Caco-2 (cell line): ENCODE measurements at regions of chr6 and their contacts with region 1.

Region 1: DNA sequence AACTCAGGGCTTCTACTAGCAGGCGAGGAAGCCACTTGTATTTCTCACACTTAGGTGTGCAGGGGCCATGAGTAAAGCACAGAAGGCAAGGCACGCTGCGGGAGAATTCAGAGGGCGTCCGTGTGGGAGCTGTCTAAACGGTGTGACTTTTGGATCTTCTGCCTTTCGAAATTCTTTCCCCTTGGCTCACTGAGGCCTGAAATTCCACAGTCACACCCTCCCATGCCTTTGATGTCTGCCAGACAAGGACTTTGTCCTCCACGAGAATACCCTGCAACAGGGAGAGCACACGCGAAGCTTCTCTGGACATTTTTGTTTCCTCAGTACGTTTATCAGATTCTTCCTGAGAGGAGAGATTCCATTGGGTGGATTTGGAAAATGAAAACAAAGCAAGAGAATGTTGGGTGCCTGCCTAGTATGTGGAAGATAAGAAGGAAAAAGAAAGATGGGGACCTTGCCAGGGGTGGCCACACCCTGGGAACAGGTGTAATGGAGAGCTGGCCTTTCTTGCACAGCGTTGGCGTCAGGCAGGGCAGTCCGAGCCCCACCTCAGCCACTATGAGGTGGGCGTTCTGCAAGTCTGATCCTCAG is 235.7 kb downstream of the MYLK4 start:
- DNase-seq: peak; percentile 91 to 96
- H3K4me3 ChIP-seq: peak overlapping the region; percentile 13
- H3K4me3 Mint-ChIP-seq: peak overlapping the region; percentile 72
- H3K27ac Mint-ChIP-seq: peak overlapping the region; percentile 95
- H3K4me1 ChIP-seq: peaks cover 59% of the 10 kb centered on the region
- H3K4me1 Mint-ChIP-seq: peaks cover 26% of the 10 kb centered on the region
- H3K27me3 ChIP-seq: no peaks in the 10 kb centered on the region
- H3K27me3 Mint-ChIP-seq: no peaks in the 10 kb centered on the region
- CTCF ChIP-seq: no peak

Region 2: GRCh38 chr6:1657771-1658165 is 857.3 kb before region 1 on chr6:
- CTCF ChIA-PET with region 1: no interaction called
- POLR2A ChIA-PET with region 1: interaction called, 14 read pairs
- intact Hi-C with region 1: no loop called
- DNase-seq: no peak
- H3K4me3 ChIP-seq: no peak overlapping the region
- H3K4me3 Mint-ChIP-seq: no peak overlapping the region
- H3K27ac Mint-ChIP-seq: no peak overlapping the region
- H3K4me1 ChIP-seq: no peaks in the 10 kb centered on the region
- H3K4me1 Mint-ChIP-seq: no peaks in the 10 kb centered on the region
- H3K27me3 ChIP-seq: no peaks in the 10 kb centered on the region
- H3K27me3 Mint-ChIP-seq: no peaks in the 10 kb centered on the region
- CTCF ChIP-seq: no peak

Region 3: DNA sequence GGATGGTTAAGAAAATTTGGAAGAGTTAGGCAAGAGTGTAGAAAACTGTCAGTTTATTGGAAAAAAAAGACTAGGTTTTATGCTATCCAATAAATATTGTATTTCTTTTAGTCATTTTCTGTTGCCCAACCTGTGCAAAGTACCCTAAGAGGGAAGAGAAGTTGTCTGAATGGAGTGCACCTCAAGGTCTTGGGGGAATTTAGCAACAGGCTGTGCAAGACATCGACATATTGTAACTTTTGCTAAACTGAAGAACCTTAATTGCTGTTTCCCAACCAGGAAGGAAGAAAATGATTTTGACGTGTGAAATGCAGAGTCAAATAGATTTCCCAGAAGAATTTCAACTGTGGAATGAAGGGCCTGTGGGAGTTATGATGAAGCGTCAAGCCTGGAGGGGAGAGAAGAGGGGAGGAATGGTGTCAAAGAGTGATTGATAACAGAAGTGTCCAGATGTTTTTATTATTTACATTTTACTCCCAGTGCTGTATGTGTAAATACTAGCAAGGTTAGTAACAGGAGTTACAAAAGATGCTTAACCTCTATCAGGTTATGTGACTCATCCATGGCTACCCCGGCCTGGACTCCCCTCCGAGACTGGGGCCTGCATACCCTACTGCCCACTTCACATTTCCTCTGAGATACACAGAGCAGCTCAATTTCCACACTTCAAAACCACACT is 11.1 kb before region 1 on chr6:
- CTCF ChIA-PET with region 1: no interaction called
- POLR2A ChIA-PET with region 1: interaction called, 4 read pairs
- intact Hi-C with region 1: loop called (anchors 1 kb)
- DNase-seq: peak; percentile 51 to 59
- H3K4me3 ChIP-seq: no peak overlapping the region
- H3K4me3 Mint-ChIP-seq: no peak overlapping the region
- H3K27ac Mint-ChIP-seq: peak overlapping the region; percentile 5
- H3K4me1 ChIP-seq: peaks cover 41% of the 10 kb centered on the region
- H3K4me1 Mint-ChIP-seq: peaks cover 36% of the 10 kb centered on the region
- H3K27me3 ChIP-seq: no peaks in the 10 kb centered on the region
- H3K27me3 Mint-ChIP-seq: no peaks in the 10 kb centered on the region
- CTCF ChIP-seq: no peak

Region 4: DNA sequence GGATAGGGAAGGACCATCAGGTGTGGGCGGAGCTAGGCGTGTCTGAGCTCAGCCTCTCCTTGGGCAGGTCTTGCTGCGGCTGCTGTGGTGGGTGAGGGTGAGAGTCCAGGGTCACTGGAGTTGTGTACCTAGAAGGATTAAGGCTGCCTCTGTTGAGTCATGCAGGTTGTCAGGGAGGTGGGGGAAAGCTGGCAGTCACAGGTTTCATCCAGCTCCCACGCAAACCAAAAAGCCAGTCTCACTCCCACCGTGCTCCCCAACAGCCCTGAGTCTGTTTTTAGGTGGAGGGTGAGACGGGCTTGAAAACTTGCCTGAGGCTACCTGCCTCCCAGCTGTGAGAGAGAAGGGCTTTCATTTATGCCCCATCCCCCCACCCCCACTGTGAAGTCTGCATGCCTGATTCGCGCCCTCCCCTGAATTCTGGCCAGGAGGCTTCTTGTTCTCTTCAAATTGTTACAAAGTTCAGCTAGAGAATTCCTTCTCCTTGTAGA is 74.2 kb after region 1 on chr6:
- CTCF ChIA-PET with region 1: interaction called, 10 read pairs
- POLR2A ChIA-PET with region 1: interaction called, 5 read pairs
- intact Hi-C with region 1: loop called (anchors 1 kb)
- DNase-seq: peak; percentile 87 to 97
- H3K4me3 ChIP-seq: no peak overlapping the region
- H3K4me3 Mint-ChIP-seq: peak overlapping the region; percentile 66
- H3K27ac Mint-ChIP-seq: peak overlapping the region; percentile 93
- H3K4me1 ChIP-seq: peaks cover 28% of the 10 kb centered on the region
- H3K4me1 Mint-ChIP-seq: peaks cover 25% of the 10 kb centered on the region
- H3K27me3 ChIP-seq: no peaks in the 10 kb centered on the region
- H3K27me3 Mint-ChIP-seq: no peaks in the 10 kb centered on the region
- CTCF ChIP-seq: no peak

Region 5: GRCh38 chr6:2765166-2765895 is 250.3 kb after region 1 on chr6 and contains the start of gene WRNIP1:
- CTCF ChIA-PET with region 1: no interaction called
- POLR2A ChIA-PET with region 1: no interaction called
- intact Hi-C with region 1: no loop called
- DNase-seq: peak; percentile 97 to 98
- H3K4me3 ChIP-seq: peak within 1 kb of the TSS; percentile 90
- H3K4me3 Mint-ChIP-seq: peak within 1 kb of the TSS; percentile 72
- H3K27ac Mint-ChIP-seq: peak within 1 kb of the TSS; percentile 94
- H3K4me1 ChIP-seq: no peaks in the 10 kb centered on the region; the same call in 1 of the 2 replicates
- H3K4me1 Mint-ChIP-seq: peaks cover 18% of the 10 kb centered on the region
- H3K27me3 ChIP-seq: no peaks in the 10 kb centered on the region
- H3K27me3 Mint-ChIP-seq: no peaks in the 10 kb centered on the region
- CTCF ChIP-seq: peak; percentile 32 to 59
- total RNA-seq, gene WRNIP1: 46.5 and 51.7 TPM in 2 replicates

Region 6: DNA sequence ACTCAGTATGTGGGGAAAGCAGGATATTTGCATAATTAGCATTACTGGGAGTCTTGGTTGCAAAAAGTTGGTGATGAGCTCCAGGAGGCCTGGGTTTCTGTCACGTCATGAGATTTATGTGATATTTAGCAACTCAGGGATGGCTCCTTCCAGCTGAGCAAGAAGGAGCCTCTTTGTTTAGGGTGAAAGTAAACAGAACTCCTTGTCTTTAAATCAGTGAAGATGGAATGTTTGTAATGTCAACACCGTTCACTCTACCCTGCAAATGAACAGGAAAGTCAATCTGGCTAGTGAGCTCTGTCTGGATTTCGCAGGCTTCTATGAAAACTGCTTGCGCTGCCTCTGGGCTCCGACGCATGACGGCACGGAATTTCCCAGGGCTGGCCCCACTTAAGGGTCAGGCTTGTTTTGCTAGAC is 1149.6 kb after region 1 on chr6:
- CTCF ChIA-PET with region 1: no interaction called
- POLR2A ChIA-PET with region 1: no interaction called
- intact Hi-C with region 1: no loop called
- DNase-seq: peak; percentile 78 to 80
- H3K4me3 ChIP-seq: peak overlapping the region; percentile 12; the same call in 1 of the 2 replicates
- H3K4me3 Mint-ChIP-seq: peak overlapping the region; percentile 70
- H3K27ac Mint-ChIP-seq: peak overlapping the region; percentile 82
- H3K4me1 ChIP-seq: peaks cover 36% of the 10 kb centered on the region
- H3K4me1 Mint-ChIP-seq: peaks cover 18% of the 10 kb centered on the region
- H3K27me3 ChIP-seq: no peaks in the 10 kb centered on the region
- H3K27me3 Mint-ChIP-seq: no peaks in the 10 kb centered on the region
- CTCF ChIP-seq: no peak